Dendritic cell treated with granulocyte-macrophage colony-stimulating factor and Interleukin-4, amounts not matched to agents 40 ng/mL and 50 ng/mL, for 4 days (primary cell): ENCODE measurements at regions of chr10 and their contacts with region 1.

Region 1: GRCh38 chr10:72784551-72785351 is 92.8 kb downstream of the MCU start:
- H3K4me3 Mint-ChIP-seq: no peak overlapping the region
- H3K27ac Mint-ChIP-seq: peak overlapping the region; percentile 49
- H3K4me1 Mint-ChIP-seq: peaks cover 27% of the 10 kb centered on the region
- H3K27me3 Mint-ChIP-seq: no peaks in the 10 kb centered on the region

Region 2: DNA sequence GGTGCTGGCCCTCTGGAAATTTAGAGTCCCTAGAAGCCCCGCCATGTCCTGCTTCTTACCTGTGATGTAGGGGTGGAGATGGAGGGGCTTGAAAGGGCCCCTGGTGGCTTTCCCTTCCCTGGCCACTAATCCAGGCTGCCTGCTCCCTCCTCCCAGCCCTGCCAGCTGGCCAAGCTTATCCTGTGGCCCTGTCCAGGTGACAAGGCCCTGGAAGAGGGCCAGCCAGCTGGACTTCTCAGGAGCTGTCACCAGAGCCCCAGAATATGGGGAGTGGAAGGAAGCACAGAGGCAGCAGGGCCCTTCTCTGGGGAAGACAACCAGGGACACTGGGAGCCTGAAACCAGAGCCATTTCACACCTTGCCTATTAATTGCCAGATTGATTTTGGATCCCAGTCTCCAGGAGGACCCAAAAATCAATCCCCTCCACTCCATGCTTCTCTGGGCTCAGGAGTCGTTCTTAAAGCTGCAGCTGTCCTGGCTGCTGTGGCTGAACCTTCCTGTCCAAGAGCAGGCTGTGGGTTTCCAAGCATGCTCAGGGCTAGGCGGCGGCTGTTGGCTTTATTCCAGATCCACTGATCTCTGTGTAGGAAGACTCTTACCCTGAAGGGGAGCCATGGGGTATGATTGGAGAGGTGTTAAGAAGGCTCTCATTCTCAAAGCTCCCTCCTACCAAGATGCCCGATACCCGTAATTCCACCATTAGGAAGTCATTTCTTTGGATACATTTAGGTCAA is 1843.8 kb before region 1 on chr10:
- intact Hi-C with region 1: no loop called
- H3K4me3 Mint-ChIP-seq: no peak overlapping the region
- H3K27ac Mint-ChIP-seq: no peak overlapping the region
- H3K4me1 Mint-ChIP-seq: no peaks in the 10 kb centered on the region
- H3K27me3 Mint-ChIP-seq: peaks cover 8% of the 10 kb centered on the region

Region 3: DNA sequence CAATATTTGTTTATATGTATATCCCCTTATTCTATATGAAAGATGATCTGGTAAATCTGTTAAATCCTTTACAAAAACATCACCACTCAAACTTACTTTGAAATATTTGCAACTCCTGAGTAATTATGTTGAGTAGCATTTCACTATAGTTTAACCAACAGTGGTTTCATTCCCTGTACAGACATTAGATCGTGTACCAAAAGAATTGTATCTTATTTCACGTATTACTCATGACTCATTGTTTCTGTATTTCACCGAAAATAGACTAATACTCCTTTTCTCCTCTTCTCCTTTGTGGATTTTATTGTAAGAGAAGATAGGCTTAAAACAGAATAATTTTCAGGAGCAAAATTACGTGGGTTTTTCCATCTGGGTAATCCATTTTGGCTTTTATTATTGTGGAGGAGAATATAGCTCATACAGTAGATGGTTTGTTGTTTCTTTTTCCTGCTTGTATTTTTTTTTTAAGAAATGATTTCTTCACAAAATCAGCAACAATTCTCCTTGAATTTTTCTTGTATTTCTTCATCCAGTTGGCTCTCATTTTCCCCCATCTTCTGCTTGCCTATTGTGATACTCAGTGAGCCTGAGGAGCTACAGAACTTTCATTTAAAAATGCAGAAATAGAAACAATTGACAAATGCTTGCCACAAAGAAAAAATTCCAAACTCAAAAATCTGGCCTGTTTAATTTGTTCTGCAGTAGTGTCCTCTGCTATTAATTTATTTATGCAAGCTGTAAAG is 18.2 kb after region 1 on chr10:
- intact Hi-C with region 1: loop called (anchors 2 kb)
- H3K4me3 Mint-ChIP-seq: no peak overlapping the region
- H3K27ac Mint-ChIP-seq: peak overlapping the region; percentile 25
- H3K4me1 Mint-ChIP-seq: peaks cover 7% of the 10 kb centered on the region
- H3K27me3 Mint-ChIP-seq: no peaks in the 10 kb centered on the region

Region 4: DNA sequence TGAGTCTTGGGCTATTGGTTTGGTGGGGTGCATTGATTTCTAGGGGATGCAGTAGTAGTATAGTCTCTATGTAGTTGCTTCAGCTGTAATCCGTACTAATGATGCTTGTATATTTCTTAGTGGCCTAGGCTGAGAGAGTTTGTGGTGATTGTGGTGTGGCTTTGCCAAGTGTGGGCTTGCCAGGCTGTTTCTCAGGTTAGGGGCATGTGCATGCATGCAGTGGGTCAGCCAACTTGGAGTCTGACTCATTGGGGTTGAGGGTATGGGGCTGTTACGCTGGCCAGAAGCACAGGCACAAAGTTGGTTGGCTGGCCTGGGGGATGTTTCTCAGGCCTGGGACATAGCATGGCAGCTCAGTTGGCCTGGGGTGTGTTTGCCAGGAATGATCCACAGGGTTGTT is 195.6 kb after region 1 on chr10:
- intact Hi-C with region 1: no loop called
- H3K4me3 Mint-ChIP-seq: no peak overlapping the region
- H3K27ac Mint-ChIP-seq: no peak overlapping the region
- H3K4me1 Mint-ChIP-seq: no peaks in the 10 kb centered on the region
- H3K27me3 Mint-ChIP-seq: peaks cover 3% of the 10 kb centered on the region